Activated T-helper 1 cell treated with anti-CD3 and anti-CD28 coated beads, Interleukin-12 subunit alpha, Interleukin-12 subunit beta, Interleukin-2, Interleukin-4 antibody, amounts not matched to agents 30 ng/mL and 10 ng/mL and 1 ng/mL, durations not matched to agents 14 hours and 24 hours and 36 hours (primary cell): ENCODE measurements at regions of chr20 and their contacts with region 1.

Region 1: GRCh38 chr20:50790651-50791277 is 4.1 kb upstream of the BCAS4 start:
- DNase-seq: peak; percentile 71
- H3K4me3 Mint-ChIP-seq: no peak overlapping the region
- H3K27ac Mint-ChIP-seq: peak overlapping the region; percentile 52
- H3K4me1 Mint-ChIP-seq: peaks cover 5% of the 10 kb centered on the region
- H3K27me3 Mint-ChIP-seq: peaks cover 6% of the 10 kb centered on the region

Region 2: DNA sequence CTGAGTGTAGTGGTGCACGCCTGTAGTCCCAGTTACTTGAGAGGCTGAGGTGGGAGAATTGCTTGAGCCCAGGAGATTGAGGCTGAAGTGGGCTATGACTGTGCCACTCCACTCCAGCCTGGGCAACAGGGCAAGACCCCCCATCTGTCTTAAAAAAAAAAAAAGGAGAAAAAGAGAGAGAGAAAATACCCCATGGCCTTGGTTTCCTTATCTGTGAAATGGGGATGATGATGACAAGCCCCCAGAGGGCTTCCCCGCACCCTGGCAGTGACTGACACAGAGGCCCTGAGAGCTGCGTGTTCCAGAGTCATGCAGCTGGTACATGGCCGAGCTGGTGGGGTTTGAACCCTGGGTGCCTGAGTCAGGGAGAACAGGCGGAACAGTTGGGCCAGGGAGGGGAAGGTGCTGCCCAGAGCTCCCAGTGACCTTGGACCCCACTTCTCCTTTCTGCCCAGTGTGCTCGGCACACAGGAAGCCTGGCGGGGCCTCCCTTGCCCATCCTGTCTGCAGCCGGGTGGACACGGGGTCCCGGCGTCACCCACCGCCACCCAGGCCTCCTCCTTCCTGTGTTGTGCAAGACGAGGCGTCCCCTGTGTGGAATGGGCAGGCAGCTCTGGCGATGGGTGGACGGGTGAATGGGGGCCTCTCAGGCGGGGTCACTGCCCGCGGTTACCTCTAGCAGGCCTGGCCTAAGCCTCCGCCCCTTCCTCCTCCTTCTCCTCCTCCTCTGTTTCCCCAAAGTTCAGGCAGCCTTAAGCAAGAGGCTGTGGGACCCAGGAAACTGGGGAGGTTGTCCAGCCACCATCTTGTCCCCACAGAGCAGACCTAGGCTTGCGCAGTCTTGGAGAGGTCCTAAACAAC is 516.0 kb before region 1 on chr20:
- intact Hi-C with region 1: no loop called
- DNase-seq: no peak
- H3K4me3 Mint-ChIP-seq: no peak overlapping the region
- H3K27ac Mint-ChIP-seq: no peak overlapping the region
- H3K4me1 Mint-ChIP-seq: peaks cover 13% of the 10 kb centered on the region
- H3K27me3 Mint-ChIP-seq: peaks cover 13% of the 10 kb centered on the region

Region 3: GRCh38 chr20:50804418-50805064 is 13.8 kb after region 1 on chr20:
- intact Hi-C with region 1: loop called (anchors 1 kb)
- DNase-seq: peak; percentile 12
- H3K4me3 Mint-ChIP-seq: peak overlapping the region; percentile 24
- H3K27ac Mint-ChIP-seq: peak overlapping the region; percentile 66
- H3K4me1 Mint-ChIP-seq: peaks cover 22% of the 10 kb centered on the region
- H3K27me3 Mint-ChIP-seq: no peaks in the 10 kb centered on the region

Region 4: DNA sequence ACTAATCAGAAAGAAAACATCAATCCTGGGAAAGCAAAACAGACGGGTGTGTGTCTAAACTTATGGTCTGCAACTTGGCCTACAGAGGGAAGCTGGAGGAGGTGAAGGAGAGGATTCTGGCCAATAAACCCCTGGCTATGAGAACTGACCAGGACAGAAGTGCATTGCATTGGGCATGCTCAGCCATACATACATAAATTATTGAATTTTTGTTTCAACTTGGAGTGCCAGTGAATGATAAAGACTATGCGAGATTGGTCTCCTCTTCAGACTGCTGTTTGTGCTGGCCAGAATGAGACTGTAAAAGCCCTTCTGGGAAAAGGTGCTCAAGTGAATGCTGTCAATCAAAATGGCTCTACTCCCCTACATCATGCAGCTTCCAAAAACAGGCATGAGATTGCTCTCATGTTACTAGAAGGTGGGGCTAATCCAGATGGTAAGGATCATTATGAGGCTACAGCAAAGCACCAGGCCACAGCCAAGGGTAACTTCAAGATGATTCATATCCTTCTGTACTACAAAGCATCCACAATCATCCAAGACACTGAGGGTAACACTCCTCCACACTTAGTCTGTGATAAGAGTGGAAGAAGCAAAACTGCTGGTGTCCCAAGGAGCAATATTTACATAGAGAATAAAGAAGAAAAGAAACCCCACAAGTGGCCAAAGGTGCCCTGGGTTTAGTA is 123.1 kb after region 1 on chr20:
- intact Hi-C with region 1: loop called (anchors 5 kb)
- DNase-seq: peak; percentile 6
- H3K4me3 Mint-ChIP-seq: no peak overlapping the region
- H3K27ac Mint-ChIP-seq: peak overlapping the region; percentile 52
- H3K4me1 Mint-ChIP-seq: peaks cover 73% of the 10 kb centered on the region
- H3K27me3 Mint-ChIP-seq: no peaks in the 10 kb centered on the region

Region 5: GRCh38 chr20:50958615-50959542 is 168.1 kb after region 1 on chr20 and contains the start of gene MOCS3:
- intact Hi-C with region 1: loop called (anchors 1 kb)
- DNase-seq: peak; percentile 80
- H3K4me3 Mint-ChIP-seq: peak within 1 kb of the TSS; percentile 99
- H3K27ac Mint-ChIP-seq: peak within 1 kb of the TSS; percentile 92
- H3K4me1 Mint-ChIP-seq: peaks cover 50% of the 10 kb centered on the region
- H3K27me3 Mint-ChIP-seq: no peaks in the 10 kb centered on the region
- total RNA-seq, gene MOCS3: 6.2 and 6.7 TPM in 2 replicates

Region 6: GRCh38 chr20:51306503-51307358 is 516.0 kb after region 1 on chr20:
- intact Hi-C with region 1: loop called (anchors 2 kb)
- DNase-seq: peak; percentile 49
- H3K4me3 Mint-ChIP-seq: no peak overlapping the region
- H3K27ac Mint-ChIP-seq: no peak overlapping the region
- H3K4me1 Mint-ChIP-seq: peaks cover 7% of the 10 kb centered on the region
- H3K27me3 Mint-ChIP-seq: peaks cover 23% of the 10 kb centered on the region